ENCODE measurements at regions of chr5 and their contacts with region 1.

Region 1: GRCh38 chr5:78416677-78417425 is 56.4 kb downstream of the SCAMP1 start:
- DNase-seq: no peak
- ATAC-seq: no peak
- H3K4me3 ChIP-seq: no peak overlapping the region
- H3K27ac ChIP-seq: no peak overlapping the region
- H3K4me1 ChIP-seq: peaks cover 0 to 7% (median 0%) of the 10 kb centered on the region in 9 donors
- H3K27me3 ChIP-seq: no peaks in the 10 kb centered on the region
- CTCF ChIP-seq: no peak

Region 2: GRCh38 chr5:79672392-79672791 is 1255.5 kb after region 1 on chr5:
- intact Hi-C with region 1: loop called in 1 of 10 experiments (anchors 5 kb)
- DNase-seq: no peak
- ATAC-seq: no peak
- H3K4me3 ChIP-seq: no peak overlapping the region
- H3K27ac ChIP-seq: no peak overlapping the region
- H3K4me1 ChIP-seq: no peaks in the 10 kb centered on the region
- H3K27me3 ChIP-seq: no peaks in the 10 kb centered on the region
- CTCF ChIP-seq: no peak